ENCODE measurements at regions of chr17 and their contacts with region 1.

Region 1: GRCh38 chr17:73311781-73312641 is at the start of gene CDC42EP4:
- DNase-seq: peak; percentile 98 to 99 (median 98)
- ATAC-seq: peak; percentile 74 to 86 (median 75)
- H3K4me3 ChIP-seq: peak within 1 kb of the TSS; percentile 60 to 92 (median 85)
- H3K27ac ChIP-seq: peak within 1 kb of the TSS; percentile 84 to 96 (median 92)
- H3K4me1 ChIP-seq: peaks cover 0 to 24% (median 3%) of the 10 kb centered on the region in 4 donors
- H3K27me3 ChIP-seq: no peaks in the 10 kb centered on the region
- CTCF ChIP-seq: no peak
- POLR2A ChIP-seq: peak; percentile 99
- total RNA-seq, gene CDC42EP4: 27.5 to 34.9 (median 30.9) TPM

Region 2: DNA sequence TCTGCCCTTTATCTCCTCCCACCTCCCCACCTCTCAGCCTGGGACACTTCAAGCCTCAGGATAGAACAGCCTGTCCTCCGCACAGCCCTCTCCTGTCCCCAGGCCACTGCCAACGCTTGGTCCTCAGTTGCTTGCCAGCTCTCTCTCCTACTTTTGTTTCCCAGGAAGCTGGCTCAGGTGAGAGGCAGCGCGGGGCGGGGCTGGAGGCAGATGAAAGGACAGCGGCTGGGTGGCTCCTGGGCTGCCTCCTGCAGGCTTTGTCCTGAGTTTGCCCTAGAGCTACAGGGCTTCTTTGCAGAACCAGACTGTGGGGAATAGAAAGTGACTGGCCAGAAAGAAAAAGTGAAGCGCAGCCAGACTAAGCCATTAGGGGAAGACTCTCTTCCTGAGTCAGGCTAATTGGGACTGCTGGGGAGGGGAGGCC is 48.0 kb after region 1 on chr17:
- intact Hi-C with region 1: loop called in 1 of 2 experiments (anchors 10 kb)
- DNase-seq: peak in 2 of 3 donors; percentile 67 to 68
- ATAC-seq: peak; percentile 42 to 83 (median 66)
- H3K4me3 ChIP-seq: no peak overlapping the region
- H3K27ac ChIP-seq: no peak overlapping the region
- H3K4me1 ChIP-seq: no peaks in the 10 kb centered on the region
- H3K27me3 ChIP-seq: no peaks in the 10 kb centered on the region
- CTCF ChIP-seq: peak in 2 of 4 donors; percentile 5 to 23
- POLR2A ChIP-seq: no peak

Region 3: GRCh38 chr17:73420895-73421294 is 108.9 kb after region 1 on chr17:
- intact Hi-C with region 1: no loop called
- DNase-seq: no peak
- ATAC-seq: no peak
- H3K4me3 ChIP-seq: no peak overlapping the region
- H3K27ac ChIP-seq: no peak overlapping the region
- H3K4me1 ChIP-seq: no peaks in the 10 kb centered on the region
- H3K27me3 ChIP-seq: no peaks in the 10 kb centered on the region
- CTCF ChIP-seq: no peak
- POLR2A ChIP-seq: no peak

Region 4: DNA sequence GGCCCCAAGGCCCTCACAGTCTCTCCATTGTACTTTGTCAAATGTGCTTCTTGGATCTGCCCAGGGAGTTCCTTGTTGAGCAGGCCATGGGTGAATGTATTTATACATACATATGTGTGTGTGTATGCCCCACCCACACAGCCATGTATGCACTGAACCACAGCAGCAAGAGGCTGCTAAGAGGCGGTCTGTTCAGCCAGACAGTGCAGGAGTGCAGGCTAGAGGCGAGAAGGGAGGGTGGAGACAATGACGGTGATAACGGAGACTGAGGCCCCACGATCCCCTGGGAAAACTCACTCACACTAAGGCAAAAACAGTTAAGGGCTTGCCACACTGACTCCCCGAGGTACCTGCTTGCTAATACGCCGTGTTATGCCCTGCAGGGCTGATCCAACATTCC is 150.8 kb after region 1 on chr17:
- intact Hi-C with region 1: no loop called
- DNase-seq: no peak
- ATAC-seq: no peak
- H3K4me3 ChIP-seq: no peak overlapping the region
- H3K27ac ChIP-seq: no peak overlapping the region
- H3K4me1 ChIP-seq: no peaks in the 10 kb centered on the region
- H3K27me3 ChIP-seq: no peaks in the 10 kb centered on the region
- CTCF ChIP-seq: no peak
- POLR2A ChIP-seq: no peak